ENCODE measurements at regions of chr17 and their contacts with region 1.

Region 1: DNA sequence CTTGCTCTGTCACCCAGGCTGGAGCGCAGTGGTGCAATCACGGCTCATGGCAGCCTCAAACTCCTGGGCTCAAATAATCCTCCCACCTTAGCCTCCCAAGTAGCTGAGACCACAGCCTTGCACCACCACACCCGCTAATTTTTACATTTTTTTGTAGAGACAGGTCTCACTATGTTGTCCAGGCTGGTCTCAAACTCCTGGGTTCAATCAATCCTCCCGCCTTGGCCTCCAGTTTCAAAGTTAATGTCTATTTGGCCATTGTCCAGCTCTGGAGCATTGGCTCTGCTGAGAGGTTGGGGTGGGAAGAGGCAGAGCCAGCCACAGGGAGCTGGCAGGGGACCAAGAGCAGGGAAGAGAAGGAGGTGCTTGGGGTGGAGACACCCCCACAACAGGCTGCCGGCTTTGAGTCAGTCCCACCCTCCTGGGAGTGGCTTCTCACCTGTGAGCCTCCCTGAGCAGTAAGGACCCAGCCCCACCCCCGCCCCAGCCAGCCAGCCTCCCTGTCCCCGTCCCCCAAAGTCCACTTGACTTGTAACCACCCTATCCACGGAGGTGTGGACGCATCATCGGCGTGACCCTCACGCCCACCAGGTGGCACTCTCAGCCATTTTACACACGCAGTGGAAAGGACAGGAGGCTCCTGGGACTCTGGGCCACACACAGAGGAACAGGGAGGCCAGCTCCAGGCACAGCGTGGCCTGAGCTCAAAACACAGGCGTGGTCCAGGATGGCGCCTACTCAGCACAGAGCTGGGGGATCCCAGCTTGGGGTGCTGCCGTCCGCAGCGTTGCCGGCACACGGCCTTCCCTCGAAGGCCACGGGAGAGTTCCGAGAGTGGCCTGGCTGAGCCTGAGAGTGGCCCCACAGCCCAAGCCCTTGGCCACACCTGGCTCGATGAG is 22.8 kb upstream of the PVALEF start:
- DNase-seq: peak; percentile 76
- ATAC-seq: peak; percentile 93
- H3K4me3 ChIP-seq: no peak overlapping the region
- H3K27ac ChIP-seq: peak overlapping the region; percentile 25; the same call in 1 of the 2 replicates
- H3K4me1 ChIP-seq: peaks cover 6 to 12% of the 10 kb centered on the region in 2 experiments; a peak in 3 of 4 replicates
- H3K27me3 ChIP-seq: no peaks in the 10 kb centered on the region
- CTCF ChIP-seq: peak; percentile 78 to 85 (median 84); a peak in 5 of 6 replicates
- POLR2A ChIP-seq: no peak
- RAD21 ChIP-seq: peak; percentile 87

Region 2: GRCh38 chr17:81200695-81201580 is 58.4 kb after region 1 on chr17:
- CTCF ChIA-PET with region 1: interaction called, 5 read pairs
- POLR2A ChIA-PET with region 1: no interaction called
- RAD21 ChIA-PET with region 1: no interaction called
- intact Hi-C with region 1: loop called (anchors 1 kb)
- DNase-seq: peak; percentile 54
- ATAC-seq: peak; percentile 94
- H3K4me3 ChIP-seq: no peak overlapping the region
- H3K27ac ChIP-seq: no peak overlapping the region; the same call in 1 of the 2 replicates
- H3K4me1 ChIP-seq: peaks cover 0 to 8% of the 10 kb centered on the region in 2 experiments; a peak in 1 of 4 replicates
- H3K27me3 ChIP-seq: no peaks in the 10 kb centered on the region
- CTCF ChIP-seq: peak; percentile 46 to 78 (median 69); a peak in 5 of 6 replicates
- POLR2A ChIP-seq: no peak
- RAD21 ChIP-seq: no peak; the same call in 1 of the 2 replicates

Region 3: DNA sequence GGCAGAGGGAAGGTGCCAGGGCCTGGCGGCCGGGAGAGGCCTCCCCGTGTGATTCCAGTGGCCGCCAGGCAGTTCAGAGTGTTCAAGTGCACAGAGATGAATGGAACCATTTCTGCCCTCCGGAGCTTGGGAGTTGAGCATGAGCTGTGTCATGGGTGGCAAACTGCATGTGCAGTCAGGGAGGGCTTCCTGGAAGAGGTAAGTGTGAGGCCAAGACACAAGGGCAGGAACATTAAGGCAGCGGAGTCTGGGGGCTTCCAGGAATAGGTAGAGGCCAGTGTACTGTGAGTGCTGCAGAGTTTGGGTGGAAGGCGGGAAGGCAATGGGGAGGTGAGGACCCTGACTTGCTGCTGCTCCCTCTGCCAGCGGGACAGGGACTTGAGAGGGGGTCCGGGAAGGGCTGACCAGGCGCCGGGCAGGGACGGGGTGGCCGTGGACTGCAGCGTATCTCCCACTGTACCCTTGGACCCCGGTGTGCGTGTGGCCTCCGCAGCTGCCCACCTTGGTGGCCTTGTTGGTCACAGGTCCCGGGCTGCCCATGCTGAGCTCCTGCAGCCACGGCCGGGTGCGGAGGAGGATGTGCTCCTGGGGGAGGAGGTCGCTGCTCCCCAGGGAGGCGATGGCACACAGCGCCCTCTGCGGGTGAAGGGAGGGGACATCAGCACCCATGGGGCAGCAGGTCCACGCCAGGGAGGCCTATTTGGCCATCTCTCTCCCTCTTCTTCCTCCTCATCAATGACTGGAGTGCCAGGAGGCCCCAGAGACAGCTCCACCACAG is 87.7 kb after region 1 on chr17:
- CTCF ChIA-PET with region 1: interaction called, 4 read pairs
- POLR2A ChIA-PET with region 1: interaction called, 3 read pairs
- RAD21 ChIA-PET with region 1: no interaction called
- intact Hi-C with region 1: loop called (anchors 1 kb)
- DNase-seq: no peak
- ATAC-seq: peak; percentile 85
- H3K4me3 ChIP-seq: no peak overlapping the region
- H3K27ac ChIP-seq: no peak overlapping the region
- H3K4me1 ChIP-seq: no peaks in the 10 kb centered on the region
- H3K27me3 ChIP-seq: no peaks in the 10 kb centered on the region
- CTCF ChIP-seq: peak in 2 of 3 experiments; percentile 85 to 87; a peak in 5 of 6 replicates
- POLR2A ChIP-seq: no peak
- RAD21 ChIP-seq: no peak

Region 4: GRCh38 chr17:81238817-81239600 is 96.5 kb after region 1 on chr17 and contains the starts of genes NDUFAF8 and TEPSIN:
- CTCF ChIA-PET with region 1: interaction called, 11 read pairs
- POLR2A ChIA-PET with region 1: interaction called, 3 read pairs
- RAD21 ChIA-PET with region 1: interaction called, 4 to 8 read pairs
- intact Hi-C with region 1: loop called (anchors 1 kb)
- DNase-seq: peak; percentile 100
- ATAC-seq: peak; percentile 93
- H3K4me3 ChIP-seq: peak within 1 kb of the TSS; percentile 94 to 100
- H3K27ac ChIP-seq: peak within 1 kb of the TSS; percentile 86
- H3K4me1 ChIP-seq: peaks cover 12 to 35% of the 10 kb centered on the region in 2 experiments; a peak in 3 of 4 replicates
- H3K27me3 ChIP-seq: no peaks in the 10 kb centered on the region
- CTCF ChIP-seq: no peak
- POLR2A ChIP-seq: peak; percentile 24
- RAD21 ChIP-seq: no peak
- total RNA-seq, gene NDUFAF8: 102 TPM
- total RNA-seq, gene TEPSIN: 50.6 TPM